ENCODE measurements at regions of chr22 and their contacts with region 1.

Region 1: DNA sequence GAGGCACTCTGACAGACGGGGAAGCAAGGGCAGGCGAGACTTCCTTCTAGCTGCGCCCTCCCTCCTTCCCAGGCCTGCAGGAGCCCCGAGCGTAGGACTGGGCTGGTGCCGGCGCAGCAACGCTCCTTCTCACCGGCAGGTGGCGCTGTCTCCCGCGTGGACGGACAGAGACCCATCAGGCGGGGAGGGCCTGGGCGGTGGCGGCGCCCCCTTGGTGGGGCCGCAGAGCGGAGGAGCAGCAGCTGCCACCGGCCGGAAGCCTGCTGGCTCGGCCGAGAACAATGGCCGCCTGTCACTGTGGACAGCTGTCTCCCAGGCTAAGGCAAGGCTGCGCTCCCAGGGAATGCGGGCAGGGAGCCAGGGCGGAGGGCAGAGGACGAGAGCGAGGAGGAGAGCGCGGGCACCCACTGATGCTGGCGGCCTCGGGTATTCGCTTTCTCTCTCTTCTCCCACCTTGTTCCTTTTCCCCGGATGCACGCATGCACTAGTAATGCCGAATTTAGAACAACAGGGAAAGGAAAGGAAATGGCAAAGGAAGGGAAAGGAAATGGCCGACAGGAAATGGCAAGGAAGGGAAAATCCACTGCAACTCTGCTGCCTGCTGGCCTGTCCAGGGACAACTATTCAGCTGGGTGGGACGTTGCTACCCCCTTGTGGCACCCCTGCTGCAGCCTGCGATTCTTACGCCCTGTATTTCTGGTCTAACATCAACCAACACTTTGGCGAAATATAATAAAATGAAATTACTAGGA is 14.4 kb downstream of the PPM1F start:
- DNase-seq: peak; percentile 62
- ATAC-seq: peak; percentile 99
- H3K4me3 ChIP-seq: peak overlapping the region; percentile 76
- H3K27ac ChIP-seq: peak overlapping the region; percentile 59
- H3K4me1 ChIP-seq: peaks cover 16% of the 10 kb centered on the region
- H3K27me3 ChIP-seq: no peaks in the 10 kb centered on the region
- CTCF ChIP-seq: peak; percentile 98 to 100 (median 99)
- EP300 ChIP-seq: 0 out of 4 replicates have a peak, but pooled peaks of 1 of the 2 experiments have one; percentile 16
- POLR2A ChIP-seq: peak; percentile 85
- RAD21 ChIP-seq: peak; percentile 85

Region 2: GRCh38 chr22:21697880-21698279 is 240.4 kb before region 1 on chr22:
- CTCF ChIA-PET with region 1: interaction called, 6 read pairs
- POLR2A ChIA-PET with region 1: interaction called, 10 read pairs
- RAD21 ChIA-PET with region 1: no interaction called
- SMC1A ChIA-PET with region 1: interaction called, 4 read pairs
- in situ Hi-C with region 1: no loop called
- intact Hi-C with region 1: no loop called
- DNase-seq: no peak
- ATAC-seq: no peak
- H3K4me3 ChIP-seq: no peak overlapping the region
- H3K27ac ChIP-seq: no peak overlapping the region
- H3K4me1 ChIP-seq: no peaks in the 10 kb centered on the region
- H3K27me3 ChIP-seq: no peaks in the 10 kb centered on the region
- CTCF ChIP-seq: no peak
- EP300 ChIP-seq: no peak
- POLR2A ChIP-seq: no peak
- RAD21 ChIP-seq: no peak

Region 3: DNA sequence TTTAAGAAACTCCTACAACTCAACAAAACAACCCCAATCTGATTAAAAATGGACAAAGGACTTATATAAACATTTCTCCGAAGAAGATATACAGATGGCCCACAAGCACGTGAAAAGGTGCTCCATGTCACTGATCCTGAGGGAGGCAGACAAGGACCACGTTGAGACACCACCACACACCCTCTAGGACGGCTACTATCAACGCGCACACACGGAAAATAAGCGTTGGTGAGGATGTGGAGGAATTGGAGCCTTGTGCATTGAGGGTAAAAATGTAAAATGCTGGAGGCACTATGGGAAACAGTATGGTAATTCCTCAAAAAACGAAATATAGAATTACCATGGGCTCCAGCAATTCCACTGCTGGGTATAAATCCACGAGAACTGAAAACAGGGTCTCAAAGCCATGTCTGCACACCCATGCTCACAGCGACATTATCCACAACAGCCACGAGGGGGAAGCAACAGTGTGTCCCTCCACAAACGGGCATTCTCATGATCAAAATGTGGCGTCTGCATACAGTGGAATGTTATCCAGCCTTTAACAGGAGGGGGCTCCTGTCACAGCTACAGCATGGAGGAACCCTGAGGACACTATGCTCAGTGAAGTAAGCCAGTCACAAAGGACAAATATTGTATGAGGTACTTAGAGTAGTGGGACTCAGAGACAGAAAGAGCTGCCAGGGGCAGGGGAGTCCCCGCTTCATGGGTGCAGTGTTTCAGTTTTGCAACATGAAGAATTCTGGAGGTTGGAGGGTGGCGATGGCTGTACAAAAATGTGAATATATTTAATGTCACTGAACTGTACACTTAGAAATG is 225.1 kb before region 1 on chr22:
- CTCF ChIA-PET with region 1: interaction called, 36 read pairs
- POLR2A ChIA-PET with region 1: no interaction called
- RAD21 ChIA-PET with region 1: interaction called, 4 read pairs
- SMC1A ChIA-PET with region 1: interaction called, 7 read pairs
- in situ Hi-C with region 1: no loop called
- intact Hi-C with region 1: loop called (anchors 1 kb)
- DNase-seq: peak; percentile 25
- ATAC-seq: peak; percentile 97
- H3K4me3 ChIP-seq: no peak overlapping the region
- H3K27ac ChIP-seq: no peak overlapping the region
- H3K4me1 ChIP-seq: no peaks in the 10 kb centered on the region
- H3K27me3 ChIP-seq: no peaks in the 10 kb centered on the region
- CTCF ChIP-seq: peak; percentile 79 to 91 (median 84)
- EP300 ChIP-seq: no peak
- POLR2A ChIP-seq: no peak
- RAD21 ChIP-seq: peak; percentile 93

Region 4: DNA sequence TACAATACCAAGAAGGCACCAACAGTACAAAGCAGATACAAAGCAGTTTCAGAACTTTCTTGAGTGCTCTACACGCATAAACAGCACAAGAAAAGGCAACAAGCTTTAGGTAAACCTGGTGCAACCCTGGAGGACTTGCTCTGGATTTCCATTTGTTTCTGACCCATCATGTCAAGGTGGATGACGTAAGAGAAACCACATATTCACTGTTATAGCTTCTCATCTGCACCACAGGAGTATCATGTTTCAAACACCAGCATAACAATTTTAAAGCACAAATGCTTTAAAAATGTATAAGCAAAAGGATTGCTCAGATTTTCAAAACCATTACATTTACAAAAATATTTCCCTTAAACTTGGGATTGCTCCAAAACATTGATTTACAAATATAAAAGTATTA is 177.6 kb before region 1 on chr22:
- CTCF ChIA-PET with region 1: interaction called, 7 read pairs
- POLR2A ChIA-PET with region 1: interaction called, 4 read pairs
- RAD21 ChIA-PET with region 1: interaction called, 10 read pairs
- SMC1A ChIA-PET with region 1: interaction called, 4 read pairs
- in situ Hi-C with region 1: no loop called
- intact Hi-C with region 1: no loop called
- DNase-seq: no peak
- ATAC-seq: peak; percentile 14
- H3K4me3 ChIP-seq: no peak overlapping the region
- H3K27ac ChIP-seq: no peak overlapping the region
- H3K4me1 ChIP-seq: peaks cover 55% of the 10 kb centered on the region
- H3K27me3 ChIP-seq: no peaks in the 10 kb centered on the region
- CTCF ChIP-seq: no peak
- EP300 ChIP-seq: no peak; a peak in 1 of 4 replicates
- POLR2A ChIP-seq: no peak
- RAD21 ChIP-seq: no peak

Region 5: DNA sequence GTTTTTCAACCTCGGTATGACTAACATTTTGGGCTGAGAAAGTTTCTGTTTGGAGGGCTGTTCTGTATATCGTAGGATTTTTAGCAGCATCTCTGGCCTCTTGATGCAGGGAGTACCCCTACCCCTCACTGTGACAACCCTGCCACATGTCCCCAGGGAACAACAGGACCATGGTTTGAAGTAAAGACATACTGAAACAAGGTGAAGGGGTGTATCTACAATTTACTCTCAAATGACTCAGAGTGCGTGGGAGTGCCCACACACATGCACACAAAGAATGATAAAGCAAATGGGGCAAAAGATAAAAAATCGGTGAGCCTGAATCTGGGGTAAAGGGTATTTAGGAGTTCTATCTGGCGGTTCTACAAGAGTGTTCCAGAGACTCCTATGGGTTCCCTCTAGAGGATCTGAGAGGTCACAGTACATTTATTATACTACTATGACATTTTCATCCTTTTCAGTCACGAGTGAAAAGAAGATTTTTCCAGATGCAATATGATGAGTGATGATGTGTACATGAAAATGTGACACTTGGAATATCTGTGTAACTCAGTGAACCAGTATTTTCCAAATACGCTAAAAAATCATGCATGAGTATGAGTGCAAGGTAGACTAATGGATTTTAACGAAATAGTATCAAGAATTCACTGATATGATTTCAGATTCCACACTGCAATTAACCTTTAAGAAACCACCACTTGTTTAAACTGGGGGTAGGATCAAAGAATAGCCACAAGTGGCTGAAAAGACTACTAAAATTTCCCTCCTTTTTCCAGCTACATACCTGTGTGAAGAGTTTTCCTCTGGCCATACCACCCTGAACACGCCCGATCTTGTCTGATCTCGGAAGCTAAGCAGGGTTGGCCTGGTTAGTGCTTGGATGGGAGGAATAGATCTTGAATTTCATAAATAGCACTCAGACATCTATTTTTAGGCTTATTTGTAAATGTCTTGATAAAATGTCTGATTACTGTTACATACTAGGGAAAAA is 146.3 kb before region 1 on chr22:
- CTCF ChIA-PET with region 1: no interaction called
- POLR2A ChIA-PET with region 1: no interaction called
- RAD21 ChIA-PET with region 1: no interaction called
- SMC1A ChIA-PET with region 1: no interaction called
- in situ Hi-C with region 1: no loop called
- intact Hi-C with region 1: loop called (anchors 5 kb)
- DNase-seq: peak; percentile 62
- ATAC-seq: peak; percentile 96
- H3K4me3 ChIP-seq: no peak overlapping the region
- H3K27ac ChIP-seq: no peak overlapping the region
- H3K4me1 ChIP-seq: peaks cover 8% of the 10 kb centered on the region
- H3K27me3 ChIP-seq: no peaks in the 10 kb centered on the region
- CTCF ChIP-seq: 0 out of 6 replicates have a peak, but pooled peaks of 2 of the 3 experiments have one; percentile 7
- EP300 ChIP-seq: peak in 1 of 2 experiments; percentile 43; a peak in 1 of 4 replicates
- POLR2A ChIP-seq: no peak
- RAD21 ChIP-seq: 0 out of 2 replicates have a peak, but pooled peaks have one; percentile 1

Region 6: DNA sequence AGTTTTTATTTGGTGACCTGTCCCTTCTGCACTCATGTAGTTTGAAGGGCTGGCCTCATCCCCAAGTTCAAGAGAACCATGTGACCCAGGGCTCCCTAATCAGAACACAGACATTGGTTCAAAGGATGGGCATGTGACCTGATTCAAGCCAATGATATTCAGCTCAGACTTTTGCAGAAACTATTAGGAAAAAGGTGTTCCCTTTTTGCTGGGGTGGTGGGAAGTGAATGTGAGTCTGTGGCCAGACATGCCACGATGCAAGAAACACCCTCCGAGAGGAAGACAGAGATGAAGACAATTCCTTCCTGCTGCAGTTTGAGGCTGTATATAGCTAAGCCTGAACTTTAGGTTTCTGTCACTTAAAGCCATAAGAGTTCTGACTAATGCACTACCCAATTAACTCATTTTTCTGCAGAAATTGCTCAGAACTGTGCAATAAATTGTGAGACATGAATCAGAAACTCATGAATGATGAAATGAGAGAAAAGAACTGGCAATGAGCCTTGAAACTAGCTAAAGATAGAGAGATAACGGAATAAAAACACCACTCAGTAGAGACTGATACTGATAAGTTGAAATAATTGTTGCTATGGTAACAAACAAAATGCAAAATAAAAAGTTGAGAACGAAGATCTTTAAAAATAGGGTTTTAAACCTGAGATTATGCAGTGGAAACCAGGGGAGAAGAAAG is 61.6 kb before region 1 on chr22:
- CTCF ChIA-PET with region 1: interaction called, 3 read pairs
- POLR2A ChIA-PET with region 1: interaction called, 3 read pairs
- RAD21 ChIA-PET with region 1: no interaction called
- SMC1A ChIA-PET with region 1: no interaction called
- in situ Hi-C with region 1: loop called (anchors 10 kb)
- intact Hi-C with region 1: no loop called
- DNase-seq: no peak
- ATAC-seq: peak; percentile 85
- H3K4me3 ChIP-seq: no peak overlapping the region
- H3K27ac ChIP-seq: no peak overlapping the region
- H3K4me1 ChIP-seq: peaks cover 5% of the 10 kb centered on the region
- H3K27me3 ChIP-seq: no peaks in the 10 kb centered on the region
- CTCF ChIP-seq: no peak
- EP300 ChIP-seq: no peak
- POLR2A ChIP-seq: no peak
- RAD21 ChIP-seq: no peak

Region 7: GRCh38 chr22:22087854-22088657 is 149.8 kb after region 1 on chr22:
- CTCF ChIA-PET with region 1: no interaction called
- POLR2A ChIA-PET with region 1: no interaction called
- RAD21 ChIA-PET with region 1: no interaction called
- SMC1A ChIA-PET with region 1: no interaction called
- in situ Hi-C with region 1: no loop called
- intact Hi-C with region 1: no loop called
- DNase-seq: no peak
- ATAC-seq: no peak
- H3K4me3 ChIP-seq: no peak overlapping the region
- H3K27ac ChIP-seq: no peak overlapping the region
- H3K4me1 ChIP-seq: peaks cover 3% of the 10 kb centered on the region
- H3K27me3 ChIP-seq: no peaks in the 10 kb centered on the region
- CTCF ChIP-seq: no peak
- EP300 ChIP-seq: no peak
- POLR2A ChIP-seq: no peak
- RAD21 ChIP-seq: no peak